Adrenal gland (tissue), 19 donors: ENCODE measurements at regions of chr12 and their contacts with region 1.

Region 1: GRCh38 chr12:116210131-116210530 is 67.4 kb downstream of the MED13L start:
- DNase-seq: no peak
- H3K4me3 ChIP-seq: no peak overlapping the region
- H3K27ac ChIP-seq: no peak overlapping the region
- H3K4me1 ChIP-seq: peaks cover 8 to 35% of the 10 kb centered on the region in 2 donors
- H3K27me3 ChIP-seq: no peaks in the 10 kb centered on the region
- CTCF ChIP-seq: no peak
- POLR2A ChIP-seq: no peak

Region 2: GRCh38 chr12:116159175-116159574 is 51.0 kb before region 1 on chr12:
- intact Hi-C with region 1: loop called in 1 of 2 experiments (anchors 10 kb)
- DNase-seq: peak in 1 of 7 donors; percentile 29
- H3K4me3 ChIP-seq: no peak overlapping the region
- H3K27ac ChIP-seq: peak overlapping the region in 1 of 5 donors; percentile 5
- H3K4me1 ChIP-seq: peaks cover 0 to 50% of the 10 kb centered on the region in 2 donors
- H3K27me3 ChIP-seq: no peaks in the 10 kb centered on the region
- CTCF ChIP-seq: no peak
- POLR2A ChIP-seq: no peak